Caco-2 (cell line): ENCODE measurements at regions of chr18 and their contacts with region 1.

Region 1: GRCh38 chr18:9971313-9971920 is 57.6 kb downstream of the VAPA start:
- DNase-seq: peak; percentile 61 to 80
- H3K4me3 ChIP-seq: no peak overlapping the region
- H3K4me3 Mint-ChIP-seq: no peak overlapping the region
- H3K27ac Mint-ChIP-seq: no peak overlapping the region
- H3K4me1 ChIP-seq: no peaks in the 10 kb centered on the region
- H3K4me1 Mint-ChIP-seq: peaks cover under 1% of the 10 kb centered on the region
- H3K27me3 ChIP-seq: no peaks in the 10 kb centered on the region
- H3K27me3 Mint-ChIP-seq: no peaks in the 10 kb centered on the region
- CTCF ChIP-seq: peak; percentile 67 to 76

Region 2: GRCh38 chr18:10140461-10141282 is 169.3 kb after region 1 on chr18:
- CTCF ChIA-PET with region 1: no interaction called
- POLR2A ChIA-PET with region 1: no interaction called
- intact Hi-C with region 1: loop called (anchors 5 kb)
- DNase-seq: peak; percentile 74 to 82
- H3K4me3 ChIP-seq: no peak overlapping the region
- H3K4me3 Mint-ChIP-seq: peak overlapping the region; percentile 35
- H3K27ac Mint-ChIP-seq: peak overlapping the region; percentile 83
- H3K4me1 ChIP-seq: peaks cover 26% of the 10 kb centered on the region
- H3K4me1 Mint-ChIP-seq: peaks cover 30% of the 10 kb centered on the region
- H3K27me3 ChIP-seq: no peaks in the 10 kb centered on the region
- H3K27me3 Mint-ChIP-seq: no peaks in the 10 kb centered on the region
- CTCF ChIP-seq: no peak

Region 3: DNA sequence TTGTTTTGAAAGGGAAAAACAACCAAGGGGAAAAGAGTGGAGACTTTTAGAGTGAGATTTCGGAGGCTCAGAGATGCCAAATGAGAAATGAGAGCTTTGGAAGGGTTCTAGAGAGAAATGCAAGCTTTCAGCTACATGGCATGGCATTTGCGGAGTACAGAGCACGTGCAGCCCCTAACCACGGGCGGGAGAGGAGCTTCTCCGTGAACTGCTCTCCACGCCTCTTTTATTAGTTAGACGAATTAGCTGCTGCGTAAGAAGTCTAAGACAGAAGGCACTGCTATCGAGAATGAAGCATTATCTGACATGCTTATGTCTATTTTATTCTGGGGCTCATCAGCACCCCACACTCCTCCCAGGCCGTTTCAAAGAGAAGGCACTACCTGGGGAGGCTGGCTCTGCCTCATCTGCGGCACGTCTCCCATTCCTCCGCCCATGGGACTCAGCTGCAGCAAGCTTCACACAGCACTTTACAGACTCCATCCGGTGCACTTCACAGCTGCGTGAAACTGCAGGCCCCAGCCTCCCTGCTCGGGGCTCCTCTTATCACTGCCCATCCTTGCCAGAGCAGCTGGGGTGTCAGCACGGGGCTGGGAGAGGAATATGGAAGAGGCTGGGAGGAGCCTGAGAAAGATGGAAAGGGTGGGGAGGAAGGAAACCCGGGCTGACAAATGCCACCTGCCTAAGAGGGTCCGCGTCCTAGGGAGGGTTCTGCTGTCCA is 275.8 kb after region 1 on chr18:
- CTCF ChIA-PET with region 1: no interaction called
- POLR2A ChIA-PET with region 1: no interaction called
- intact Hi-C with region 1: loop called (anchors 10 kb)
- DNase-seq: no peak
- H3K4me3 ChIP-seq: no peak overlapping the region
- H3K4me3 Mint-ChIP-seq: no peak overlapping the region
- H3K27ac Mint-ChIP-seq: no peak overlapping the region
- H3K4me1 ChIP-seq: no peaks in the 10 kb centered on the region
- H3K4me1 Mint-ChIP-seq: no peaks in the 10 kb centered on the region
- H3K27me3 ChIP-seq: no peaks in the 10 kb centered on the region
- H3K27me3 Mint-ChIP-seq: no peaks in the 10 kb centered on the region
- CTCF ChIP-seq: no peak

Region 4: DNA sequence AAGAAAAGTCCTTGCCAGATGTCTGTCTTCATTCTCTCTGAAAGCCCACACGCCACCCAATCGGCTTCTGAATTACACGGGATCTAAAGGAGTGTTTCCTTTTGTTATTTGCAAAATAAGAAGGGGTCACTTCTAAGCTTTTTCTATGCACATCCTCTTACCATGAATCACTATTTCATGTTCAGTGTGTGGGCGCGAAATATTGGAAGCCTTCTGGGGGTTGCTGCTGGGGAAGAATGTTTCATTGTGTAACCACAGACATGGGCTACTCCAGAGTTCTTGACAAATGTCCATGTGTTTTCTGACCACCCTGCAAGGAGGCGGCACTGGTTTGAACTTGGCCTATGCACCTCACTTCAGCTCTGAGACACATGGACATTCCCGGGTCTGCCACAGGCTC is 349.4 kb after region 1 on chr18:
- CTCF ChIA-PET with region 1: no interaction called
- POLR2A ChIA-PET with region 1: no interaction called
- intact Hi-C with region 1: loop called (anchors 2 kb)
- DNase-seq: no peak
- H3K4me3 ChIP-seq: no peak overlapping the region
- H3K4me3 Mint-ChIP-seq: no peak overlapping the region
- H3K27ac Mint-ChIP-seq: no peak overlapping the region
- H3K4me1 ChIP-seq: peaks cover 12% of the 10 kb centered on the region
- H3K4me1 Mint-ChIP-seq: peaks cover 8% of the 10 kb centered on the region
- H3K27me3 ChIP-seq: no peaks in the 10 kb centered on the region
- H3K27me3 Mint-ChIP-seq: peaks cover 8% of the 10 kb centered on the region
- CTCF ChIP-seq: no peak

Region 5: DNA sequence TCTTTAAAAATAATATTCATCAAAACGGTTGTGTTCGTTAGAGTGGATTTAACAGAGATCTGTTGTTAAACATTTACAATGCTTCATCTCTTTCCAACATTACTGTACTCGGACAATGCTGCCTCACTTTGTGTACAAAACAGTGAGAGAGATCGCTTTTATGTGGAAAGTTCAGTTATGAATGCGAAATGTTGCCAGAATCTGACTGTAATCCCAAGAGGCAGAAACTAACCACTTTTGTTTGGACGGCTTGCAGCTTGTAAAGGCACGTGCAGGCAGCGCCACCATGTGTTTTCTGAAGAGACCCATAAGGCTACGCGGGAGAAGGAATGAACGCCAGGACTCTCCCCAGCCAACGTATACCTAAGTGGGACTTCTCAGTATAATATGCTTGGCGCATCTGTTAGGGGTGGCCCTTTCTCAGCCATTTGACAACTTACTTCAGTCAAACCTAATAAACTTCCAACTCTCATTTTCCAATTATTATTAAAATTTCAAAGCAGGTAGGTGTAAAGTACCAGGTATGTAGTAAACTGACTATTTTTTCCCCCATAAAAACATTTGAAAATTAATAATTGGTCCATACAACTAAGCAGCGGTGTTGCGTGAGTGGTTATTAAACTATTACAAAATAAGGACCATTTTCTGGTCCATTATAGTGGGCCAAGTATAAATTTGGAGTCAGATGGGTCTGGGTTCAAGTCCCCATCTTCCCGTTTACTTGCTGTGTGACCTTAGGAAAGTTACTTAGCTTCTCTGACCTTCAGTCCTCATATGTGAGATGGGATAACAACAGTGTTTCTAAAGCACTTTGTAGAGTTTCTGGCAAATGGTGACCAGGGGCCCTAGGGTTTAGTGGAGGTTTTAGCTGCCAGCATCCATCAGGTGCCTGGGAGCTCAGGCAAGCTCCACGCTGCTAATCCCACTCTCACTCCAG is 548.9 kb after region 1 on chr18:
- CTCF ChIA-PET with region 1: interaction called, 3 read pairs
- POLR2A ChIA-PET with region 1: no interaction called
- intact Hi-C with region 1: loop called (anchors 1 kb)
- DNase-seq: peak; percentile 80 to 81
- H3K4me3 ChIP-seq: no peak overlapping the region
- H3K4me3 Mint-ChIP-seq: no peak overlapping the region
- H3K27ac Mint-ChIP-seq: no peak overlapping the region
- H3K4me1 ChIP-seq: peaks cover 3% of the 10 kb centered on the region; the same call in 1 of the 2 replicates
- H3K4me1 Mint-ChIP-seq: peaks cover 7% of the 10 kb centered on the region
- H3K27me3 ChIP-seq: peaks cover 1% of the 10 kb centered on the region
- H3K27me3 Mint-ChIP-seq: peaks cover 16% of the 10 kb centered on the region
- CTCF ChIP-seq: peak; percentile 73 to 91